ENCODE measurements at regions of chr2 and their contacts with region 1.

Region 1: DNA sequence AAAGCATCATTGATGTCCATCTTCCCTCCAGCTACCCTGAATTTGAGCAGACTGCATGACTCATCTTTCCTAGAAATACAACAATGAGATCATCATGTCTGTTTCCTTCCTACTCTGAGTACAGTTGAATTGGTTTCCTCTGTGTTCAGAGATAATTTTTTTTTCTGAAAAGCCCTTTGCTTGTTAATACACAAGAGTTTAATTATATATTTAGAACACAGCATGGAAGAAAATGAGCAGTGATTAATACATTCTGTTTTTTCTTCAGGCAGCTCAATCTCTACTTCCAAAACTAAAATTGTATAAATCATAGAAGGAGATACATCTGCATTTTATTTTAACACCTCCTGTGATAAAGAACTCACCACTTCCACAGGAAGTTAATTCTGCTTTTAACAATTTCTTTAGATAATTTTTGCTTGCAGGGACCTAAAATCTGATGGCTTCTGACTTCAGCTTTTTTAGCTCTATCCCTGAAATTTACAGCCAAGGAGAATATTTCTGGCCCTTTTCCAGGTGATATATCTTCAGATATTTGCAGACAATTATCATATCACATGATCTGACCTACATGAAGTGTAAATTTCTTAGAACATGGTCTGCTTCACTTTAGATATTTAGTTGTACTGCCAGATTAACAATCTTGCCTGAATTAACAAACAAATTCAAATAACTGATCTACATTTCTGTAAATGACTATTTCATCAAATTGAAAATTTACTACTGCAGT is 249.0 kb downstream of the TRIB2 start:
- DNase-seq: no peak
- H3K4me3 Mint-ChIP-seq: no peak overlapping the region
- H3K27ac Mint-ChIP-seq: no peak overlapping the region
- H3K4me1 Mint-ChIP-seq: peaks cover 14% of the 10 kb centered on the region
- H3K27me3 Mint-ChIP-seq: peaks cover 2% of the 10 kb centered on the region

Region 2: GRCh38 chr2:12871694-12872315 is 93.9 kb before region 1 on chr2:
- CTCF ChIA-PET with region 1: no interaction called
- intact Hi-C with region 1: no loop called
- DNase-seq: no peak
- H3K4me3 Mint-ChIP-seq: no peak overlapping the region
- H3K27ac Mint-ChIP-seq: no peak overlapping the region
- H3K4me1 Mint-ChIP-seq: peaks cover 8% of the 10 kb centered on the region
- H3K27me3 Mint-ChIP-seq: peaks cover 12% of the 10 kb centered on the region

Region 3: GRCh38 chr2:12948961-12949353 is 16.7 kb before region 1 on chr2:
- CTCF ChIA-PET with region 1: interaction called, 4 read pairs
- intact Hi-C with region 1: loop called (anchors 2 kb)
- DNase-seq: peak; percentile 29
- H3K4me3 Mint-ChIP-seq: no peak overlapping the region
- H3K27ac Mint-ChIP-seq: no peak overlapping the region
- H3K4me1 Mint-ChIP-seq: peaks cover 13% of the 10 kb centered on the region
- H3K27me3 Mint-ChIP-seq: peaks cover 18% of the 10 kb centered on the region

Region 4: DNA sequence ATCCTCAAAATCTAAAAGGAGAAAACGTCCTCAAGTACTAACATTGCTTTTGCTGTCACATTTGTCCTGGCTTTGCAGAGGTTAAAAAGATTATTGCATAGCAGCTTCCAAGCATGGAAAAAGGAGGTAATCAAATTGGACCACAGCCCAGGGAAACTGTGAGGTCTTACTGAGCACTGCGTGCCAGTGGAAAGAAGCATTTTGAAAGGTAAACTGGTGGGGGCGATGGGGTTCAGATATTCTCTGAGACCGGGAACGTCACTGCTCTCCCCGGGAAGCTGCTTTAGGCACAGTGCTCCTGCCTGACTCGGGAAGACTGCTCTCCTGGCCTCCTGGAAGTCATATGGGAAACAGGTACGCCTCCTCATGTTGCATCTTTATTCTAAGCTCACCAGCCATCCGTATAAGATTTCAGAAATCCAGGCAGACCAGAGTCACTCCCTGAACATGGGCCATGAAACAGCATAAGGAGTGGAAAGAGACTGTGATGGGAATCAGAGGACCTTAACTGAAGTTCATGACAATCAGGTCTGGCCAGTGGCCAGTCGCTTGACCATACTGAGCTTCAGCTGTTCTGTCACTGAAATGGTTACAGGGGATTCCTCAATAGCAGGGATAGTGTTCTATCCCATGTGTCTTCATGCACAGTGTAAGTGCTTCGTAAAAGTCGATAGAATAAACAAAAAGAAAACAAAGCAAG is 35.1 kb after region 1 on chr2:
- CTCF ChIA-PET with region 1: no interaction called
- intact Hi-C with region 1: loop called (anchors 5 kb)
- DNase-seq: no peak
- H3K4me3 Mint-ChIP-seq: no peak overlapping the region
- H3K27ac Mint-ChIP-seq: no peak overlapping the region
- H3K4me1 Mint-ChIP-seq: no peaks in the 10 kb centered on the region
- H3K27me3 Mint-ChIP-seq: no peaks in the 10 kb centered on the region

Region 5: GRCh38 chr2:13021470-13021957 is 55.8 kb after region 1 on chr2:
- CTCF ChIA-PET with region 1: no interaction called
- intact Hi-C with region 1: no loop called
- DNase-seq: no peak
- H3K4me3 Mint-ChIP-seq: no peak overlapping the region
- H3K27ac Mint-ChIP-seq: no peak overlapping the region
- H3K4me1 Mint-ChIP-seq: no peaks in the 10 kb centered on the region
- H3K27me3 Mint-ChIP-seq: peaks cover 12% of the 10 kb centered on the region

Measured in activated naive CD4-positive, alpha-beta T cell treated with anti-CD3 and anti-CD28 coated beads for 36 hours (primary cell).